ENCODE measurements at regions of chr12 and their contacts with region 1.

Region 1: DNA sequence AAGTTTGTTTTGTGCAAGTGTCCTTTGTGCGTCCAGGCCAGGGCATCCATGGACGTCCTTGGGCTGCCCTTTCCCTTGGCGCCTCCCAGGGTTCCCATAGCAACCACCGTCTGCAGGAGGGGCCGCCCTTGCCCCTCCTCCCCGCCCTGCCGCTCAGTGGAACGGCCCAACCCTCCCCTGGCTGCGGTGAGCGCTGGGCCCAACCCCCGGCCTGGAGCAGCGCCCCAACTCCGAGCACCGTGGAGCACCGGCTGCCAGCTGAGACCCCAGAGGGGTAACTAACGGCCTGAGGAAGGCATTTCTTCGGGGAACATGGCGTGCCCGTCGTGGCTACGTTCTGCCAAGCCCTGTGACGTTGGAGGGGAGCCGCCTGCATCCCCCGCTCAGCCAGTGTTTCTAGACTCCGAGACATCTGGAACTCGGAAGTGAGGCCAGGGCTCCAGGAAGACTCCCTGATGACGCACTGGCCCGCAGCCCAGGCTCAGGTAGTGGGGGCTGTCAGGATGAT is 5.3 kb upstream of the ACACB start:
- DNase-seq: peak; percentile 61
- ATAC-seq: peak; percentile 85
- H3K4me3 ChIP-seq: peak overlapping the region in 4 of 5 experiments; percentile 50 to 62 (median 58)
- H3K4me3 Mint-ChIP-seq: peak overlapping the region; percentile 81
- H3K27ac ChIP-seq: peak overlapping the region in 1 of 2 donors; percentile 59
- H3K27ac Mint-ChIP-seq: peak overlapping the region; percentile 73
- H3K4me1 ChIP-seq: peaks cover 0 to 3% of the 10 kb centered on the region in 2 donors
- H3K4me1 Mint-ChIP-seq: peaks cover 10% of the 10 kb centered on the region
- H3K27me3 ChIP-seq: no peaks in the 10 kb centered on the region
- H3K27me3 Mint-ChIP-seq: no peaks in the 10 kb centered on the region
- CTCF ChIP-seq: no peak

Region 2: GRCh38 chr12:108967869-108968540 is 143.0 kb before region 1 on chr12:
- CTCF ChIA-PET with region 1: no interaction called
- POLR2A ChIA-PET with region 1: no interaction called
- intact Hi-C with region 1: no loop called
- DNase-seq: no peak
- ATAC-seq: no peak
- H3K4me3 ChIP-seq: no peak overlapping the region
- H3K4me3 Mint-ChIP-seq: no peak overlapping the region
- H3K27ac ChIP-seq: no peak overlapping the region
- H3K27ac Mint-ChIP-seq: no peak overlapping the region
- H3K4me1 ChIP-seq: no peaks in the 10 kb centered on the region
- H3K4me1 Mint-ChIP-seq: no peaks in the 10 kb centered on the region
- H3K27me3 ChIP-seq: peaks cover 0 to 5% (median 0%) of the 10 kb centered on the region in 4 experiments
- H3K27me3 Mint-ChIP-seq: peaks cover 10% of the 10 kb centered on the region
- CTCF ChIP-seq: peak; percentile 42

Region 3: DNA sequence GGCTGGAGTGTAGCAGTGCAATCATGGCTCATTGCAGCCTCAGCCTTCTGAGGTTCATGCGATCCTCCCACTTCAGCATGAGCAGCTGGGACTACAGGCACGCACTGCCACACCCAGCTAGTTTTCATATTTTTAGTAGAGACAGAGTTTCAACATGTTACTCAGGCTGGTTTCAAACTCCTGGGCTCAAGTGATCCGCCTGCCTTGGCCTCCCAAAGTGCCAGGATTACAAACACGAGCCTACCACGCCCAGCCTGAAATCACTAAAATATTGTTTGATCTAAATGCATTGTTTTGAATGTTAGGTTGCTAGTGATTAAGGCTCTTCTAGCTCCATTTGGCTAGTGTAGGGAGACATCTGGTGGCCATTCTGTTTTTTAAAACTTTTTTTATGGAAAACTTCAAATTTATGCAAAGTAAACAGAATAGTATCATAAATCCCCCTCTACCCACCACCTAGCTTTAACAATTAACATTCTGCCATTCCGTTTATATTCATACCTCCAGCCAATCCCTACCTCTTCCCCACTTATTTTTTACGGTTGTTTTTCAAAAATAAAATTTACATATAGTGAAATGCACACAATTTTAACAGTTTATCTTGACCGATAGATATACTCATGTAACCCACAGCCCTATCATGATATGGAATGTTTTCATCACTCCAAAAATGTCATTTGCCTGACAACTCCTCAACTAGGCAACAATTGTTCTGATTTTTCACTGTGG is 274.5 kb after region 1 on chr12:
- CTCF ChIA-PET with region 1: interaction called, 19 read pairs
- POLR2A ChIA-PET with region 1: no interaction called
- intact Hi-C with region 1: no loop called
- DNase-seq: peak; percentile 27
- ATAC-seq: no peak
- H3K4me3 ChIP-seq: no peak overlapping the region
- H3K4me3 Mint-ChIP-seq: no peak overlapping the region
- H3K27ac ChIP-seq: no peak overlapping the region
- H3K27ac Mint-ChIP-seq: no peak overlapping the region
- H3K4me1 ChIP-seq: no peaks in the 10 kb centered on the region
- H3K4me1 Mint-ChIP-seq: no peaks in the 10 kb centered on the region
- H3K27me3 ChIP-seq: peaks cover 0 to 4% (median 0%) of the 10 kb centered on the region in 4 experiments
- H3K27me3 Mint-ChIP-seq: peaks cover 25% of the 10 kb centered on the region
- CTCF ChIP-seq: peak; percentile 40

Region 4: GRCh38 chr12:109393437-109394345 is 282.6 kb after region 1 on chr12:
- CTCF ChIA-PET with region 1: interaction called, 25 read pairs
- POLR2A ChIA-PET with region 1: no interaction called
- intact Hi-C with region 1: loop called (anchors 2 kb)
- DNase-seq: peak; percentile 56
- ATAC-seq: peak; percentile 45
- H3K4me3 ChIP-seq: no peak overlapping the region
- H3K4me3 Mint-ChIP-seq: no peak overlapping the region
- H3K27ac ChIP-seq: no peak overlapping the region
- H3K27ac Mint-ChIP-seq: no peak overlapping the region
- H3K4me1 ChIP-seq: no peaks in the 10 kb centered on the region
- H3K4me1 Mint-ChIP-seq: no peaks in the 10 kb centered on the region
- H3K27me3 ChIP-seq: peaks cover 0 to 4% (median 0%) of the 10 kb centered on the region in 4 experiments
- H3K27me3 Mint-ChIP-seq: peaks cover 32% of the 10 kb centered on the region
- CTCF ChIP-seq: peak; percentile 95

Region 5: DNA sequence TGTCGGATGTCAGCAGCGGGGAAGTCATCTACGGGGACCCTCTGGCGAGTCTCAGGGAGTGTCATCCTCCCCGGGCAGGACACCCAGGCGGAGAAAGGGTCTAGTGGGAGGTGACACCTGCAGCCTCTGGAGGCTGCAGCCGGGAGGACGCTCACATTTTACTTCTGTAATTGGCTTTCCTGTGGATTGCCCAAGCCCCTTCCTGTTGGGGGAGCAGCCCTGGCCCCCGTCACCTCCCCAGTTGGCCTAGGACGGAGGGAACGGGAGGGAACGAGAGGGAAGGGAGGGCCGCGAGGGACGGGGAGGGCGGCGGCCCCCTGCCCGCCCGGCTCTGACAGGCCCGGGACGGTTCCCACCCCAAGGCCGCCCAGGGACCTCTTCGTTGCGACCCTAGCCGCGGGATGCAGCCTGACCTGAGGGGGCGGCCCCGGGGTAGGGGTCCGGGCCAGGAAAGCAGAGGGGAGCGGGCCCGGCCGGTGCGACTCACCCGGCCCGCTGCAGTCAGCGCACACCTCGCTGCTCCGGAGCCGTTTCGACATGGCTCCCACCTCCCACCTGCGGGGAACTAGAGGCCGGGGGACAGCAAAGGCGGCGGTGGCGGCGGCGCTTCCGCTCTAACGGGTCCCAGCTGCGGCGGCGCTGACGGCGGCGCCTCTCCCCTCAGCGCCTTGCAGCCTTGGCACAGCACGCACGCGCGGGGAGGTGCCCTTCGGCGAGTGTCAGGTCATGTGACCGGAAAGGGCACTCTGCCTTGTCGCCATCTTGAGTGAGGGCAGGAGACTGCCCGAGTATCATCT is 884.8 kb after region 1 on chr12 and contains the start of gene GIT2:
- CTCF ChIA-PET with region 1: no interaction called
- POLR2A ChIA-PET with region 1: no interaction called
- intact Hi-C with region 1: no loop called
- DNase-seq: peak; percentile 95
- ATAC-seq: peak; percentile 69
- H3K4me3 ChIP-seq: peak within 1 kb of the TSS; percentile 68 to 99 (median 74)
- H3K4me3 Mint-ChIP-seq: peak within 1 kb of the TSS; percentile 90
- H3K27ac ChIP-seq: peak within 1 kb of the TSS; percentile 69 to 90
- H3K27ac Mint-ChIP-seq: peak within 1 kb of the TSS; percentile 91
- H3K4me1 ChIP-seq: peaks cover 39 to 47% of the 10 kb centered on the region in 2 donors
- H3K4me1 Mint-ChIP-seq: peaks cover 67% of the 10 kb centered on the region
- H3K27me3 ChIP-seq: no peaks in the 10 kb centered on the region
- H3K27me3 Mint-ChIP-seq: no peaks in the 10 kb centered on the region
- CTCF ChIP-seq: no peak
- total RNA-seq, gene GIT2: 163 and 177 TPM in 2 replicates

Measured in B cell (primary cell).